MCF 10A (cell line): ENCODE measurements at regions of chr3 and their contacts with region 1.

Region 1: DNA sequence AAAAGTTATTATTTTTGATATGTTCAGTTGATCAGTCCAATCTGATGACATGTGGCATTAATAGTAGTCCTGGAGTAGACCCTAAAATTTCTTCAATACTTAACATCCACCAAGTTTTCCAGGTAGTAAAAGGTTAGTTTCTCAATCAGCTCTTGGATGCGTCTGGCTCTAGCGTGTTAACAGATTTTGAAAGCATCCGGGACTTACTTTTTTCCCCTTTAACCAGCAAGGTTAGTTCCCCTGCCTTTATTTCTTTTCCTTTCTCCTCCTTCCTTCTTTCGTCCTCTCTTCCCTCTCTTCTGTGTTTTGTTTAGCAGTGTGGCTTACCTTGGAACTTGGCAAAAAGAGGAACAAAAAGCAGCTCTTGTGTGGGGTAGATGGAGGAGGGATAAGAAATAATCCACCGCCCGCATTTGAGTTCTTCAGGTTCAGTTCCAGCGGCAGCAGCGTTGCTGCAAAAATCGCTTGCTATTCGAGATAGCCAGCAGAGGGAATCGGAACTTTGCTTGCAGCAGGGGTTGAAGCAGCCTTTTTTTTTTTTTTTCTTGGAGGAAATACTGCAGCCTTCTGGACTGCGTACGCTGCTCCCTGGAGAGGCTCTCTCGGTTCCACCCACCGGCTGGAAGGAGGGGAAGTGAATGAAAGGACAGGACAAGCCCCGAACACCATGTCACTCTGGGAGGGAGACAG is at the start of gene RBMS3:
- DNase-seq: peak; percentile 93
- H3K4me3 Mint-ChIP-seq: peak within 1 kb of the TSS; percentile 79
- H3K27ac Mint-ChIP-seq: peak within 1 kb of the TSS; percentile 85
- H3K4me1 Mint-ChIP-seq: peaks cover 25% of the 10 kb centered on the region
- H3K27me3 Mint-ChIP-seq: no peaks in the 10 kb centered on the region
- CTCF ChIP-seq: peak; percentile 42
- total RNA-seq, gene RBMS3: 65.5 and 74.2 TPM in 2 replicates

Region 2: GRCh38 chr3:28853830-28854229 is 426.7 kb before region 1 on chr3:
- CTCF ChIA-PET with region 1: interaction called, 14 read pairs
- POLR2A ChIA-PET with region 1: interaction called, 21 read pairs
- intact Hi-C with region 1: loop called (anchors 2 kb)
- DNase-seq: peak; percentile 31
- H3K4me3 Mint-ChIP-seq: no peak overlapping the region
- H3K27ac Mint-ChIP-seq: no peak overlapping the region
- H3K4me1 Mint-ChIP-seq: no peaks in the 10 kb centered on the region
- H3K27me3 Mint-ChIP-seq: no peaks in the 10 kb centered on the region
- CTCF ChIP-seq: peak; percentile 20

Region 3: DNA sequence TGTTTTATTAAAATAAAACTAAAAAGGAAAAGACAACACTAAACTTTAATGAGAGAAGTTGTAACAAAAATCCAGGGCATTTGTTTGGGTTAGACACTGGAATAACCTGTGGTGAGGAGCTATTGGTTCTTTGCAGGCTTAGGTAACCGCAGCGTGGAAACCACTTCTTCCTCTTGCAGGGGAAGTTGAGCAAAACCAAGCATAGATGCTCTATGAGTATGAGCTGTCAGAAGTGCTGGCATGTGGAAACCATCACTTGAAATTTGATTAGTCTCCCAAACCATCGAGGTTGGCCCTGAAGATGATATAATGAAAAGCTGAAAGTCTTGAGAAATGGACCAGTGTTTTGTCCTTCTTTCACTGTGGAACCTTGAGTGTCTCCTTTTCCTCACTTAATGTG is 126.7 kb before region 1 on chr3:
- CTCF ChIA-PET with region 1: interaction called, 3 read pairs
- POLR2A ChIA-PET with region 1: no interaction called
- intact Hi-C with region 1: loop called (anchors 10 kb)
- DNase-seq: no peak
- H3K4me3 Mint-ChIP-seq: no peak overlapping the region
- H3K27ac Mint-ChIP-seq: no peak overlapping the region
- H3K4me1 Mint-ChIP-seq: no peaks in the 10 kb centered on the region
- H3K27me3 Mint-ChIP-seq: no peaks in the 10 kb centered on the region
- CTCF ChIP-seq: no peak

Region 4: DNA sequence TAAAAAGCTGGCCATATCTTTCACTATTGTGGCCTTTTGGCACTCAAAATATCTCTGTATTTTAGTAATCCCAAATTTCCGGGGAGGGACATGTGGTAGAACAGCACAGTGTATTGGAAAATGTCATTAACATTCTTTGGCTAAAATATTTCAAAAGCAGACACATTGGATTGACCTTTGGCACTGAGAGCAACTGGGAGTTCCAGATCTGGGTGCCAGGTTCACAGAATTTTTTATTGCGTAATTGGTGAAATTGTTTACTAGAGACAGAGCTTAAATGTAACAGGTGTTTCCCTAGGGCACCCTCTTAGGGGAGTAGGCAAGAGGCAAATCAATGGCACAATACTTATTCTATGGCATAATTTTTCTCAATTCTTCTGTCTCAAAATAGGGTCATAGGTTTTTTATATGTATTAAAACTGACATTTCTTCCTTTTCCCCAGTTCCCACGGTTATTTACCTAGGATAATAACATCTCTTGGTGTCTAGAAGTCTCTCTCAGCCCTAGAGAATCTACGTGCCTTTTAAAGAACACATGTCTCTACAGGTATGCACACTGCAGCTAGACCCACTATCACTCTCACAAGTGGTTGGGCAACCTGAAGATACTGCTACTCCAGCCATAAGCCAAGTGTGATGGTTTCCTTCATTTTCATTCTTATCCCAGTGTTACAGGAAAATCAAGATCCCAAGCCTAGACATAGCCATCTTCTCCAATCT is 10.9 kb after region 1 on chr3:
- CTCF ChIA-PET with region 1: interaction called, 7 read pairs
- POLR2A ChIA-PET with region 1: interaction called, 44 read pairs
- intact Hi-C with region 1: no loop called
- DNase-seq: peak; percentile 92
- H3K4me3 Mint-ChIP-seq: peak overlapping the region; percentile 6
- H3K27ac Mint-ChIP-seq: peak overlapping the region; percentile 85
- H3K4me1 Mint-ChIP-seq: peaks cover 49% of the 10 kb centered on the region
- H3K27me3 Mint-ChIP-seq: no peaks in the 10 kb centered on the region
- CTCF ChIP-seq: no peak

Region 5: GRCh38 chr3:29427266-29428103 is 146.9 kb after region 1 on chr3:
- CTCF ChIA-PET with region 1: no interaction called
- POLR2A ChIA-PET with region 1: no interaction called
- intact Hi-C with region 1: loop called (anchors 5 kb)
- DNase-seq: no peak
- H3K4me3 Mint-ChIP-seq: no peak overlapping the region
- H3K27ac Mint-ChIP-seq: peak overlapping the region; percentile 2
- H3K4me1 Mint-ChIP-seq: peaks cover 11% of the 10 kb centered on the region
- H3K27me3 Mint-ChIP-seq: no peaks in the 10 kb centered on the region
- CTCF ChIP-seq: no peak

Region 6: DNA sequence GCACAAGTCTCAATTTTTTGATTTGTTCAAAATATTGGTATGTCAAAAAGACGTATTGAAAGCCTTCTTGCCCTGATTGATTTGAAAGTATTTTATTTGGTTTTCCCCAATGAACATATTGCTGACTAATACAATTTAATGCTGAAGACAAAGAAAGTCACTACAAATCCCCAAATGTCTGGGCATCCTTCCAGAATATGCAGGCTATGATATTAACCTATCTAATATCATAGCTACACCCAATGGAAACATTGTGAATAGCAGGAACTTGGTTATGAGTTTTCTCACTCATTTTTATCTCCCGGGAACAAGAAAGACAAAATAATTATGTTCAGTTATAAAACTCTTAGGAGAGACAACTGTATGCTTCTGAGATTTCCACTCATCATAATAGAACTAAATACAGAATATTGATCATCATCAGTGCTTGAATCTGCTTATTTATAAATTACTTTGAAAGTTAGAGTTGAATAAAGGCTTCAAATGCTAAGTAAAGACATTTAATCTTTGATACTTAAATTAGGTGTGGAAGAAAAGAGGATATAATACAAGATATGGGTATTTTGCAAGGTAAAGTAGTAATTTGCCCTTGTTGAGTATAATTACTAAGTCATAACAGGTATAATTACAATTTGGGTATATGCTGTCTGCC is 484.2 kb after region 1 on chr3:
- CTCF ChIA-PET with region 1: interaction called, 14 read pairs
- POLR2A ChIA-PET with region 1: interaction called, 144 read pairs
- intact Hi-C with region 1: loop called (anchors 1 kb)
- DNase-seq: peak; percentile 94
- H3K4me3 Mint-ChIP-seq: no peak overlapping the region
- H3K27ac Mint-ChIP-seq: peak overlapping the region; percentile 35
- H3K4me1 Mint-ChIP-seq: peaks cover 17% of the 10 kb centered on the region
- H3K27me3 Mint-ChIP-seq: no peaks in the 10 kb centered on the region
- CTCF ChIP-seq: peak; percentile 79